Activated CD4-positive, alpha-beta T cell treated with anti-CD3 and anti-CD28 coated beads for 36 hours (primary cell): ENCODE measurements at regions of chr1 and their contacts with region 1.

Region 1: GRCh38 chr1:217336724-217337499 is 294.0 kb downstream of the GPATCH2 start:
- DNase-seq: no peak
- ATAC-seq: no peak
- H3K4me3 Mint-ChIP-seq: no peak overlapping the region
- H3K27ac Mint-ChIP-seq: no peak overlapping the region
- H3K4me1 Mint-ChIP-seq: no peaks in the 10 kb centered on the region
- H3K27me3 Mint-ChIP-seq: no peaks in the 10 kb centered on the region

Region 2: DNA sequence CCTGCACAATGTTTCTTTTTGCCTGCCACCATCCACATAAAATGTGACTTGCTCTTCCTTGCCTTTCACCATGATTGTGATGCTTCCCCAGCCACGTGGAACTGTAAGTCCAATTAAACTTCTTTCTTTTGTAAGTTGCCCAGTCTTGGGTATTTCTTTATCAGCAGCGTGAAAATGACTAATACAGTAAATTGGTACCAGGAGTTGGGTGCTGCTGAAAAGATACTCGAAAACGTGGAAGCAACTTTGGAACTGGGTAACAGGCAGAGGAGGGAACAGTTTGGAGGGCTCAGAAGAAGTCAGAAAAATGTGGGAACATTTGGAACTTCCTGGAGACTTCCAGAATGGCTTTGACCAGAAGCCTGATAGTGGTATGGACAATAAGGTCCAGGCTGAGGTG is 131.3 kb before region 1 on chr1:
- CTCF ChIA-PET with region 1: no interaction called
- POLR2A ChIA-PET with region 1: no interaction called
- intact Hi-C with region 1: no loop called
- DNase-seq: no peak
- ATAC-seq: no peak
- H3K4me3 Mint-ChIP-seq: no peak overlapping the region
- H3K27ac Mint-ChIP-seq: no peak overlapping the region
- H3K4me1 Mint-ChIP-seq: no peaks in the 10 kb centered on the region
- H3K27me3 Mint-ChIP-seq: no peaks in the 10 kb centered on the region

Region 3: GRCh38 chr1:217348960-217349664 is 12.2 kb after region 1 on chr1:
- CTCF ChIA-PET with region 1: no interaction called
- POLR2A ChIA-PET with region 1: no interaction called
- intact Hi-C with region 1: no loop called
- DNase-seq: no peak
- ATAC-seq: no peak
- H3K4me3 Mint-ChIP-seq: no peak overlapping the region
- H3K27ac Mint-ChIP-seq: no peak overlapping the region
- H3K4me1 Mint-ChIP-seq: no peaks in the 10 kb centered on the region
- H3K27me3 Mint-ChIP-seq: no peaks in the 10 kb centered on the region

Region 4: DNA sequence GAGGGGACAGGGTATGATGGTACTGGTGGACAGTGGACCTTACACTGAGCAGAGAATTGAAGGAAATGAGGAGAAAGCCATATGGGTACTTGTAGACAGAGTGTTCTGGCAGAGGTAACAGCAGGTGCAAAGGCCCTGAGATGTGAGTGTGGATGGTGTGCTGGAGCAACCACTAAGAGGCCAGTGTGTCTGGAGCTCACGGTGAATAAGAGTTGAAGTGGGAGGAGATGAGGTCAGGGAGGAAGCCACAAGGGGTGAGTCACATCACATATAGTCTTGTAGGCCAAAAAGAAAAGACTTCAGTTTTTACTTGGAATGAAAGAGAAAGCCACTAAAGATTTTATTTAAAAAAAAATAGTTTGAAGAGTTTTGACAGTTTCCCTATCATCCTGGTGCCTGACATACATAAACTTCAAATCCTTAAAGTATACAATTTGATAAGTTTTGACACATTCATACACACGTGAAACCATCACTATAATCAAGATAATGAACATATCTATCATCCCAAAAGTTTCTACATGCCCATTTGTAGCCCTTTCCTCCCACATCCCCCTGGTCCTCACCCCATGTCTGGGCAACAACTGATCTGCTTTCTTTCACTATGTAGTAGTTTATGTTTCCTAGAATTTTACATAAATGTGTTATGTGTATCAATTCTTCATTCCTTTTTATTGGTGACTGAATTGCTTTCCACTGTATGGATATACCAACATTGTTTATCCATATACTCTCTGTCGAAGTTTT is 145.6 kb after region 1 on chr1:
- CTCF ChIA-PET with region 1: no interaction called
- POLR2A ChIA-PET with region 1: no interaction called
- intact Hi-C with region 1: no loop called
- DNase-seq: peak; percentile 83
- ATAC-seq: peak; percentile 100
- H3K4me3 Mint-ChIP-seq: no peak overlapping the region
- H3K27ac Mint-ChIP-seq: peak overlapping the region; percentile 74
- H3K4me1 Mint-ChIP-seq: peaks cover 25% of the 10 kb centered on the region
- H3K27me3 Mint-ChIP-seq: no peaks in the 10 kb centered on the region

Region 5: DNA sequence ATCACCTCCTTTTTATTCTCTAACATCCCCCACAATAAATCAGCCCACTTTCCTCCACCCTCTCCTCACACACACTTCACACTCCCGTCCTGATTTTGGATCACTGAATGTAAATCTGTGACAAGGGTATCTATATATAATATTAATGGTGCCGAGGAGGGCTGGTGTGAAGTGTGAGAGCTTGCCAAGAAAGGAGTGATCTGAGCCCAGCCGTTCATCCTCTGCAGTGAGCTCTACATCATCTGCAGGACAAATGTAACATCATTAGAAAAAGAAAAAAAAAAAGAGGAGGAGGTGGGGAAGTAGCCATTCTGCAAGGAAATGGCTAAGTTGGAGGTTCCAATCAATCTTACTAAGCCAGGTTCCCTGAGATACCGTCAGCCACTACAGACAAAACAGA is 656.5 kb after region 1 on chr1:
- CTCF ChIA-PET with region 1: no interaction called
- POLR2A ChIA-PET with region 1: interaction called, 10 read pairs
- intact Hi-C with region 1: no loop called
- DNase-seq: no peak
- ATAC-seq: no peak
- H3K4me3 Mint-ChIP-seq: no peak overlapping the region
- H3K27ac Mint-ChIP-seq: no peak overlapping the region
- H3K4me1 Mint-ChIP-seq: no peaks in the 10 kb centered on the region
- H3K27me3 Mint-ChIP-seq: no peaks in the 10 kb centered on the region